ENCODE measurements at regions of chr10 and their contacts with region 1.

Region 1: GRCh38 chr10:66378117-66378876 is 547.5 kb upstream of the LRRTM3 start:
- DNase-seq: peak; percentile 98
- ATAC-seq: peak; percentile 83
- H3K4me3 ChIP-seq: peak overlapping the region; percentile 5; the same call in 1 of the 2 replicates
- H3K27ac ChIP-seq: peak overlapping the region; percentile 9
- H3K4me1 ChIP-seq: peaks cover 28% of the 10 kb centered on the region
- H3K27me3 ChIP-seq: no peaks in the 10 kb centered on the region
- CTCF ChIP-seq: no peak

Region 2: GRCh38 chr10:65570143-65571010 is 807.9 kb before region 1 on chr10:
- CTCF ChIA-PET with region 1: no interaction called
- POLR2A ChIA-PET with region 1: interaction called, 14 read pairs
- intact Hi-C with region 1: no loop called
- DNase-seq: peak; percentile 89
- ATAC-seq: peak; percentile 93
- H3K4me3 ChIP-seq: peak overlapping the region; percentile 78
- H3K27ac ChIP-seq: peak overlapping the region; percentile 45
- H3K4me1 ChIP-seq: peaks cover 15% of the 10 kb centered on the region
- H3K27me3 ChIP-seq: no peaks in the 10 kb centered on the region
- CTCF ChIP-seq: no peak

Region 3: GRCh38 chr10:66307826-66308225 is 70.5 kb before region 1 on chr10:
- CTCF ChIA-PET with region 1: no interaction called
- POLR2A ChIA-PET with region 1: no interaction called
- intact Hi-C with region 1: no loop called
- DNase-seq: peak; percentile 78
- ATAC-seq: peak; percentile 87
- H3K4me3 ChIP-seq: no peak overlapping the region
- H3K27ac ChIP-seq: no peak overlapping the region
- H3K4me1 ChIP-seq: no peaks in the 10 kb centered on the region
- H3K27me3 ChIP-seq: no peaks in the 10 kb centered on the region
- CTCF ChIP-seq: peak; percentile 91

Region 4: DNA sequence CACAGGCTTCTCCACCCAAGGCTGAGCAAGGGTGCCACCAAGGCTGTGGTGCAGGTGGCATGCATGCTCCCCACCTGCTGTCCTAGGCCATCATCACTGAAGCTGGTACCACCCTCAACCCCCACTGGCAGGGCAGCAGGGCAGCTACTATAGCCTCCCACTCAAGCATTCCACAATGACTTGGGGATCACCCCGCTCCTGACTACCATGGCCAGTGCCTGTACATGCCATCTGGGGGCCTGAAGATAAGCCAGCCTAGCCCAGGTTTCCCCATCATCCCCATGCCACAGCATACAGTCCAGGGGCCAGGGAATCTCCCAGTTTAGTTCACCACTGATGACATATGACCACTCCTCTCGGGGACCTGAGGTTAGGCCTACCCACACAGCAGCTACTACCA is 36.6 kb after region 1 on chr10:
- CTCF ChIA-PET with region 1: no interaction called
- POLR2A ChIA-PET with region 1: no interaction called
- intact Hi-C with region 1: loop called (anchors 2 kb)
- DNase-seq: no peak
- ATAC-seq: no peak
- H3K4me3 ChIP-seq: no peak overlapping the region
- H3K27ac ChIP-seq: no peak overlapping the region
- H3K4me1 ChIP-seq: no peaks in the 10 kb centered on the region
- H3K27me3 ChIP-seq: no peaks in the 10 kb centered on the region
- CTCF ChIP-seq: no peak

Measured in PC-3 (cell line).